Naive thymus-derived CD4-positive, alpha-beta T cell (primary cell): ENCODE measurements at regions of chr18 and their contacts with region 1.

Region 1: DNA sequence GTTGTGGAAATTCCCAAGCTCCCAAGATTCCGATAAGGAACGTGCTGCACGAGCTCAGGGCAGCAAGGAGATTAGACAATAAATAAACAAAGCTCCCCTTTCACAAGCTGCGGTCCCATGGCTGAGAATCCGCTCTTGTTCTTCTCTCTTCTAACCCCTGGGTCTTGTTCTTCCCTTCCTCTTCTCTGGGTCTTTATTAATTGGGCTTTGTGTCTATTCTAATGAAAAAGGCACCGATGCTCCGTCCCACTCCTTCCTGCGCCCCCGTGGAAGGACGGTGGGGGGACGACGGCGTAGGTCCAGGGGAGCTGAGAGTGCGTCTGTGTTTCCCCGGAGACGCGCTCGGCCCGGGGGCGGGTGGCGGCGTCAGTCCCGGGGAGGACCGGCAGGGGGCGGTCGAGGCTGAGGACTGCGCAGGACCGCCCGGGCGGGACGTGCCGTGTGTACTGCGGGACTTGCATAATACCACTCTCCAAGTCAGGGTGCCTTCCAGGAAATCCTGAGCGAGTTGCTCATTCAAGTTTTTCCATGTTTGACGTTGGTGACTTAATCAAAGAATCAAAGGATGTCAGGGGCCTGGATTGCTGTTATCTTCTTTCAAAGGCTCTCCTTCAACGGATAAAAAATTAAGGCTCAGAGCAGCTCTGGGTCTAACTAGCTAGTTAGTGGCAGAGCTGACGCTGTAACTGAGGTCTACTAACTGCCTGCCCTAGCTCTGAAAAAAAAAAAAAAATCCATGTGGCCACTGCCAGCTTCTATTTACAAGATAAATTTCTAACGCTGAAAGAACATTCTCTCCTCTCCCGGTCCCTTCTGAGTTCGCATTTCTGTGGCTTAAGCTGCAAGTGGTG is 321.4 kb downstream of the TGIF1 start:
- DNase-seq: peak; percentile 31 to 91 (median 67)
- ATAC-seq: peak; percentile 99
- H3K4me3 ChIP-seq: peak overlapping the region; percentile 34
- H3K4me3 Mint-ChIP-seq: peak overlapping the region; percentile 26 to 78 (median 70)
- H3K27ac ChIP-seq: no peak overlapping the region
- H3K27ac Mint-ChIP-seq: peak overlapping the region in 1 of 9 donors; percentile 7
- H3K4me1 ChIP-seq: peaks cover 0 to 5% of the 10 kb centered on the region in 2 donors
- H3K4me1 Mint-ChIP-seq: peaks cover 7 to 19% (median 13%) of the 10 kb centered on the region in 7 donors
- H3K27me3 ChIP-seq: peaks cover 2 to 4% of the 10 kb centered on the region in 2 donors
- H3K27me3 Mint-ChIP-seq: peaks cover 16 to 57% (median 33%) of the 10 kb centered on the region in 5 donors

Region 2: DNA sequence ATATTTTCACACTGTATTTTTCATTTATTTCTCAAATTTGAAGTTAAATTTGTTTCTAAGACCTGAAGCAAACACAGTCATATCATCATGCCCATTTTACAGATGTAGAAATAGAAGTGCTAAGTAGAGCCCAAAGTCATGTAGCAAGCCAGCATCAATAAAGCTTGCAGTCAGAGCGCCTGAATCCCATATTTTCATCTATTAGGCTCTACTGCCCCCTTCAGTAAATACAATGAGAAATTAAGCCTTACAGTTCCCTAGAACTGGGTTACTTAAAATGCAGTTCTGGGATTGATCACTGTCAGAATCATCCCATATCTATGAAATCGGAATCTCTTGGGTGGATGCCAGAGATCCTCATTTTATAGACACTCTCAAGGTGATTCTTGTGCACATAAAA is 98.5 kb after region 1 on chr18:
- CTCF ChIA-PET with region 1: interaction called, 4 read pairs
- POLR2A ChIA-PET with region 1: no interaction called
- intact Hi-C with region 1: loop called (anchors 2 kb)
- DNase-seq: no peak
- ATAC-seq: no peak
- H3K4me3 ChIP-seq: no peak overlapping the region
- H3K4me3 Mint-ChIP-seq: no peak overlapping the region
- H3K27ac ChIP-seq: no peak overlapping the region
- H3K27ac Mint-ChIP-seq: no peak overlapping the region
- H3K4me1 ChIP-seq: no peaks in the 10 kb centered on the region
- H3K4me1 Mint-ChIP-seq: peaks cover 0 to 8% (median 0%) of the 10 kb centered on the region in 7 donors
- H3K27me3 ChIP-seq: no peaks in the 10 kb centered on the region
- H3K27me3 Mint-ChIP-seq: peaks cover 23 to 39% (median 27%) of the 10 kb centered on the region in 5 donors

Region 3: DNA sequence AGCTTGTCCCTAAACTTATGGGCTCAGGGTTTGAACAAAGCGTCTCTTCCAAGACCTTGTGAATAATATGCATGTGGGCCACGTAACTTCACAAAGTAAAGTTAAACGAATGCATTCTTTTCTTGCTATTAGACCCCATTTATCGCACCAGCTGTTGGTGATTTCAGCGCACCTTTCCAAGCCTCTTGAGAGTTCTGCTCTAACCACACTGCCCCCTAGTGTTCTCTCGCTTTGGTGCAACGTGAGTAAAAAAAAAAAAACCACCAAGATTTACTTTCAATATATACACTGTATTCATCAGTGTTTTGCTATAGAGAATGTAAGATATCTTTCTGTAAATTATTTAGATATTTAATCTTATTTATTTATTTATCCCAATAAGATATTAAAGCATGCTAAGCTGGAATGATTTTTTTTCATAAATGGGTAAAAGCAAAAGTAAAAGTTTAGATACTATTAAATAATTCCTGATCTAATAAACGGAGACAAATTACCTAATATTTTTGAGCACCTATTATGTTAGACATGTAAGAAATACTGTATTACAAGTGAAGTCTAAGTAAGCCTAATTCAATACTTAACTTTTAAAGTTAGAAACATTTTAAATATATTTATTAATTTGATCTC is 224.2 kb after region 1 on chr18:
- CTCF ChIA-PET with region 1: interaction called, 10 read pairs
- POLR2A ChIA-PET with region 1: no interaction called
- intact Hi-C with region 1: loop called in 1 of 2 experiments (anchors 1 kb)
- DNase-seq: peak in 8 of 9 donors; percentile 8 to 57 (median 40)
- ATAC-seq: peak; percentile 68
- H3K4me3 ChIP-seq: no peak overlapping the region
- H3K4me3 Mint-ChIP-seq: no peak overlapping the region
- H3K27ac ChIP-seq: no peak overlapping the region
- H3K27ac Mint-ChIP-seq: no peak overlapping the region
- H3K4me1 ChIP-seq: no peaks in the 10 kb centered on the region
- H3K4me1 Mint-ChIP-seq: peaks cover 0 to 5% (median 0%) of the 10 kb centered on the region in 7 donors
- H3K27me3 ChIP-seq: no peaks in the 10 kb centered on the region
- H3K27me3 Mint-ChIP-seq: peaks cover 0 to 12% (median 0%) of the 10 kb centered on the region in 5 donors

Region 4: GRCh38 chr18:4068552-4069158 is 297.3 kb after region 1 on chr18:
- CTCF ChIA-PET with region 1: no interaction called
- POLR2A ChIA-PET with region 1: no interaction called
- intact Hi-C with region 1: loop called in 1 of 2 experiments (anchors 1 kb)
- DNase-seq: peak in 6 of 9 donors; percentile 4 to 28 (median 18)
- ATAC-seq: peak; percentile 55
- H3K4me3 ChIP-seq: no peak overlapping the region
- H3K4me3 Mint-ChIP-seq: no peak overlapping the region
- H3K27ac ChIP-seq: no peak overlapping the region
- H3K27ac Mint-ChIP-seq: no peak overlapping the region
- H3K4me1 ChIP-seq: no peaks in the 10 kb centered on the region
- H3K4me1 Mint-ChIP-seq: peaks cover 0 to 2% (median 0%) of the 10 kb centered on the region in 7 donors
- H3K27me3 ChIP-seq: no peaks in the 10 kb centered on the region
- H3K27me3 Mint-ChIP-seq: peaks cover 0 to 43% (median 33%) of the 10 kb centered on the region in 5 donors

Region 5: DNA sequence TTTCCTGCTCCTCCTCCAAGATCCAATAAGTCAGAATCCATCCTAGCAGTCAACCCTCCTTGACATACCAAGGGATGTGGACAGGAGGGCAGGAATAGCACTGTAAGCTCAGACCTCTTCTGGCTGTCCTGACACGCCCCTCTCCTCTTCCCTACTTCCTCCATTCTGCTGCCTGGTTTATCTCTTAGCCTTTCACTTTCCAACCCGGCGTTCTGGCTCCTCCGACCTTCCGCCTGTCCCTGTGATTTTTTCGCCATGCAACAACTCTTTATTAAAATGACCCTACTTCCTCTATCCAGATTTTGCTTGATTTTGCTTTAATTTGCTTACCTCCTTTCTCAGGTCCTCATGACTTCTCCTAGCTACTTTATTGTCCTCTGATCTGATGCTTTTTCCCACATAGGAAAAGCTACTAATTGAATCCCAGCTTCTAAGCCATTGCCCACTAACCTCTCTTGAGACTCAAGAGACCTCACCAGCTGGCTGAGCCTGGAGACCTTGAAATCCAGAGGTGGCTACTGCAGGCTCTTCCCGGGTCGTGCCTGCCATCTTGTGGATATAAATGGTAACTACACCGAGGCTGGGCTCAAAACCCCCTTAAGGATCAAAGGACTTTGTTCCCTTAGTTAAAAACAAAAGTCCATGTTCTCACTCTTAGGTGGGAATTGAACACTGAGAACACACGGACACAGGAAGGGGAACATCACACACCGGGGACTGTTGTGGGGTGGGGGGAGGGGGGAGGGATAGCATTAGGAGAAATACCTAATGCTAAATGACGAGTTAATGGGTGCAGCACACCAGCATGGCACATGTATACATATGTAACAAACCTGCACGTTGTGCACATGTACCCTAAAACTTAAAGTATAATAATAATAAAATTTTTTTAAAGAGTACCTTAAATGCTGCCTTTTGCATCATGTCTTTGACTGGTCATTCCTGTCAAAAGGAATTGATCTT is 1286.3 kb after region 1 on chr18:
- CTCF ChIA-PET with region 1: no interaction called
- POLR2A ChIA-PET with region 1: no interaction called
- intact Hi-C with region 1: loop called in 1 of 2 experiments (anchors 10 kb)
- DNase-seq: peak; percentile 17 to 54 (median 48)
- ATAC-seq: peak; percentile 56
- H3K4me3 ChIP-seq: no peak overlapping the region
- H3K4me3 Mint-ChIP-seq: peak overlapping the region in 1 of 10 donors; percentile 8
- H3K27ac ChIP-seq: no peak overlapping the region
- H3K27ac Mint-ChIP-seq: peak overlapping the region in 6 of 9 donors; percentile 14 to 89 (median 42)
- H3K4me1 ChIP-seq: peaks cover 11 to 18% of the 10 kb centered on the region in 2 donors
- H3K4me1 Mint-ChIP-seq: peaks cover 14 to 25% (median 21%) of the 10 kb centered on the region in 7 donors
- H3K27me3 ChIP-seq: no peaks in the 10 kb centered on the region
- H3K27me3 Mint-ChIP-seq: peaks cover 0 to 4% (median 2%) of the 10 kb centered on the region in 5 donors